Dendritic cell treated with granulocyte-macrophage colony-stimulating factor and Interleukin-4, amounts not matched to agents 40 ng/mL and 50 ng/mL, for 4 days (primary cell): ENCODE measurements at regions of chr17 and their contacts with region 1.

Region 1: GRCh38 chr17:71383091-71383490 is 737.7 kb upstream of the SOX9 start:
- H3K4me3 Mint-ChIP-seq: no peak overlapping the region
- H3K27ac Mint-ChIP-seq: no peak overlapping the region
- H3K4me1 Mint-ChIP-seq: no peaks in the 10 kb centered on the region
- H3K27me3 Mint-ChIP-seq: no peaks in the 10 kb centered on the region

Region 2: DNA sequence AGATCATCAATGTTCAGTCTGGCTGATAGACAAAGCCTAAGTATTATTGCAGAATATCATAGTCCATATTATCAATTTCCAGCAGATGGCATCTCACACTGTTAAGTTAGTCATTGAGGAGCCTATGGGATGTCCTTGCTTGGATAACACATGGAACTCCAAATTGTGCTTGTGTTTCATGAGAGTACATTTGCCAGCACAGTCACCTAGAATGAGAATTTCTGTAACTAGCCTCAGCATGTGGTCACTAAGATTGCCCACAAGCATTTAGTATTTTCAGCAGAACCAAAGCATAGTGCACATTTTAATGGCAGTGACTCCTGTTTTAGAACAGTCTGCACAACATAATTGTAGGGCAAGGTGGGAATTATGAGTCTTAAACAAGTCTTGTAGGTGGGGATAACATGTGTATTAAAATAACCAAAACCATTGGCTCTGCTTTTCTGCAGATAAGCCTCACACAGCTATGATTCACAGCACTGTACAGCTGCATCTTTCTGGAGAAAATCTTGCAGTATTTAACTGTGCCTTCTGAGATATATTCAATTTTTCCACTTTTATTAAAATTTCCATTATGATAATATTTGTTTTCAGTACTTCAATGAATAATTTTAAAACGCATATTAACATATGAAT is 145.1 kb before region 1 on chr17:
- intact Hi-C with region 1: no loop called
- H3K4me3 Mint-ChIP-seq: no peak overlapping the region
- H3K27ac Mint-ChIP-seq: no peak overlapping the region
- H3K4me1 Mint-ChIP-seq: no peaks in the 10 kb centered on the region
- H3K27me3 Mint-ChIP-seq: no peaks in the 10 kb centered on the region

Region 3: DNA sequence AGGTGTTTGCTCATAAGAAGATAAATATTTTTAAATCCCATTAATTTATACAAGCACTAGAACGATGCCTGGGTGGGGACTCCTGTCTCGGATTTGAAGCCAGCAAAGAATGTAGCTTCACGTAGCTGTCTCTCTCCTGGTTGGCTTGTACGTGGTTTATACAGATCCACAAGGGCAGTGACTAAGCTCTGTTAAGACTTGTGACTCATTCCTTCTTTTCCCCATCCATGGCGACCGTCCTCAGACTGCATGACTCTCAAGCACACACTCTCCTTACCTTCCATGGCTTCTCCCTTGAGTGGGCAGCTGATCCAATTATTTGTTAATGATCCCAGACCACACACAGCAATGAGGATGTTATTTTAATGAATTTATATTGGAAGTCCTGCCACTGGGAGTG is 58.0 kb after region 1 on chr17:
- intact Hi-C with region 1: loop called (anchors 10 kb)
- H3K4me3 Mint-ChIP-seq: no peak overlapping the region
- H3K27ac Mint-ChIP-seq: no peak overlapping the region
- H3K4me1 Mint-ChIP-seq: no peaks in the 10 kb centered on the region
- H3K27me3 Mint-ChIP-seq: no peaks in the 10 kb centered on the region